Calu3 (cell line): ENCODE measurements at regions of chr11 and their contacts with region 1.

Region 1: GRCh38 chr11:67317205-67317887 is 14.0 kb downstream of the SSH3 start:
- DNase-seq: peak; percentile 97
- H3K4me3 Mint-ChIP-seq: peak overlapping the region; percentile 99
- H3K27ac Mint-ChIP-seq: peak overlapping the region; percentile 93
- H3K4me1 Mint-ChIP-seq: peaks cover 33% of the 10 kb centered on the region
- H3K27me3 Mint-ChIP-seq: no peaks in the 10 kb centered on the region
- CTCF ChIP-seq: peak; percentile 88

Region 2: DNA sequence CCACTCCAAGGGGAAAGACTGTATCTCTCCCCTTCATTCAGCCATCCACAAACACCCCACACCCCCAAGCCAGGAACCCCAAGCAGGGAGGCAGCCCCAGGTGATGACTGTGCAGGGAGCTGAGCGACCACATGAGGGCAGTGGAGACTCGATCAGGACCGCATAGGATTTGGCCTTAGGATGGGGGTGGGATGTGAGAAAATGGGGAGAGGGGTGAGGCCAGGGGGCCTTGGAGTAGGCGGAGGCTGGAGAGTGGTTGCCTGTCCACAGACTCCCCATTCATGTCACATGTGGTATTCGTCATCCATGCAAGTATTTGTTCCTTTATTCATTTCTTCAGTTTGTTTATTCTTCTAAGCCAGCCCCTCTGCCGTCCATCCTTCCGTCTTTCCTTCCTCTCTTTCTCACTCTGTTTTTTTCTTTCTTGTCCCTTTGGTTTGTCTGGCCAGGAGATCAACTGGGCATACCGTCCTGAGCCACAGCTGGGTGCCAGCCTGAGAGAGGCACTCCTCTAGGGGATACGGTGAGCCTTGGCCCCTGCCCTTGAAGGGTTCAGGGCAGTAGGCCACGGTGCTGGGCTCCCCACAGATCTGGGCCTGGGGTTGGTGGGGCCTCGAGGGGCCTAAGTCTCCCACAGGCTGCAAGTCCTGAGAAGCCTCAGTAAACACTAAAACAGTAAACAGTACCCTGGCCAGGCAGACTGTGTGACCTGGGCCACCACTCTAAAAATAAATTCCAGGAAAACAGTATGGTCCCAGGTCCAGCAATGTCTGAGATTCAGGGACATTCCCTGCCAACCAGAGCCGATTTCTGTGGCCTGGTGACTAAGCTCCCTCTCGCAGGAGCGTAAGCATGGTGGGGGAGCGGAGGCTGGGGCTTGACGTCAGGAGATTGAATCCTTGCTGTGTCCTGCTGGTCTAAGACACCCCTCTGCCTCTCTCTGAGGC is 263.2 kb before region 1 on chr11:
- CTCF ChIA-PET with region 1: interaction called, 11 read pairs
- intact Hi-C with region 1: no loop called
- DNase-seq: peak; percentile 77
- H3K4me3 Mint-ChIP-seq: peak overlapping the region; percentile 74
- H3K27ac Mint-ChIP-seq: peak overlapping the region; percentile 80
- H3K4me1 Mint-ChIP-seq: peaks cover 35% of the 10 kb centered on the region
- H3K27me3 Mint-ChIP-seq: no peaks in the 10 kb centered on the region
- CTCF ChIP-seq: peak; percentile 79

Region 3: GRCh38 chr11:67265633-67266423 is 51.5 kb before region 1 on chr11:
- CTCF ChIA-PET with region 1: interaction called, 24 read pairs
- intact Hi-C with region 1: loop called (anchors 1 kb)
- DNase-seq: peak; percentile 90
- H3K4me3 Mint-ChIP-seq: peak overlapping the region; percentile 100
- H3K27ac Mint-ChIP-seq: peak overlapping the region; percentile 66
- H3K4me1 Mint-ChIP-seq: peaks cover 46% of the 10 kb centered on the region
- H3K27me3 Mint-ChIP-seq: no peaks in the 10 kb centered on the region
- CTCF ChIP-seq: peak; percentile 71

Region 4: GRCh38 chr11:67303132-67303834 is 14.1 kb before region 1 on chr11 and contains the start of gene SSH3:
- CTCF ChIA-PET with region 1: interaction called, 15 read pairs
- intact Hi-C with region 1: no loop called
- DNase-seq: peak; percentile 90
- H3K4me3 Mint-ChIP-seq: peak within 1 kb of the TSS; percentile 70
- H3K27ac Mint-ChIP-seq: peak within 1 kb of the TSS; percentile 87
- H3K4me1 Mint-ChIP-seq: peaks cover 10% of the 10 kb centered on the region
- H3K27me3 Mint-ChIP-seq: no peaks in the 10 kb centered on the region
- CTCF ChIP-seq: no peak
- total RNA-seq, gene SSH3: 73.0 and 84.3 TPM in 2 replicates

Region 5: DNA sequence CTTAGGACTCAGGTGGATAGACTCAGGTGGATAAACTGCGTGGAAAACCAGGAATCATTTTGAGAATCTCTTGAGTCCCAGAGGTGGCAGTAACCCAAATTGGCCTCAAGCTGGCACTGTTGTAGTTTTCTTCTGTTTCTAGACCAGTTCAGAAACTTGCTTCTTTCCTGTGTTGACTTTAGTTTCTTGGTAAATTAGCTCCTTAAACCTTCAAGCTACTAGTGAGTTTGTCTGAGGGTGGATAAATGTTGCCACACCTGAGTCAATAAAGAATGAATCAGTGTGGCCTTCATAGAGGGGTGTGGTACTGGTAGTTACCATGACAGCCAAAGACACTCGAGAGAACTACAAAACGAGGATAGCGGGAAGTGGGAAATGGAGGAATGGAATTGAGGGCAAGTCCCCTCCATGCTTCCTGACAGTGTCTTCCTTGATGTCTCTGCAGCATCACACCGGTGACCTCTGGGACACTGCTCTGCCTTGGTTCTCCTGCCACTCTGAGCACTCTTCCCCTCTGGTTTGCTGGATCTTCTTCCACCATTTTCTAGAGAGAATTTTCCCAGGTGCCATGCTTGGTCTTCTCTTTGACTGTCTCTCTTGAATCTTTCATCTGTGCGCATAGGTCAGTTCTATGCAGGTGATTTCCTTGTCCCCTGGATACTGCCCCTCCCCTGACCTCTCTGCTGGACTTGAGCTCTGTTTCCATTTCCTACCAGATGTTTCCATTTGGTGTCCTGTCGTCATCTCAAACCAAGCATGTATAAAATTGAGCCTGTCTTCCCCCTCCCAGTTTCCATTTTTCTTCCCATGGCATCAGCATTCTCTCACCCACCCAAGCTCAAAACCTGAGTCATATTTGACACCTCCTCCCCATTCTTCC is 28.8 kb after region 1 on chr11:
- CTCF ChIA-PET with region 1: interaction called, 25 read pairs
- intact Hi-C with region 1: no loop called
- DNase-seq: peak; percentile 77
- H3K4me3 Mint-ChIP-seq: peak overlapping the region; percentile 21
- H3K27ac Mint-ChIP-seq: peak overlapping the region; percentile 96
- H3K4me1 Mint-ChIP-seq: peaks cover 55% of the 10 kb centered on the region
- H3K27me3 Mint-ChIP-seq: no peaks in the 10 kb centered on the region
- CTCF ChIP-seq: peak; percentile 84

Region 6: GRCh38 chr11:67648140-67649123 is 331.1 kb after region 1 on chr11:
- CTCF ChIA-PET with region 1: no interaction called
- intact Hi-C with region 1: no loop called
- DNase-seq: no peak
- H3K4me3 Mint-ChIP-seq: no peak overlapping the region
- H3K27ac Mint-ChIP-seq: no peak overlapping the region
- H3K4me1 Mint-ChIP-seq: peaks cover 9% of the 10 kb centered on the region
- H3K27me3 Mint-ChIP-seq: no peaks in the 10 kb centered on the region
- CTCF ChIP-seq: no peak